Activated CD4-positive, alpha-beta T cell treated with anti-CD3 and anti-CD28 coated beads for 36 hours (primary cell): ENCODE measurements at regions of chr19 and their contacts with region 1.

Region 1: GRCh38 chr19:1131738-1132551 is 28.2 kb downstream of the GPX4 start:
- DNase-seq: peak; percentile 96
- ATAC-seq: peak; percentile 60
- H3K4me3 Mint-ChIP-seq: peak overlapping the region; percentile 91
- H3K27ac Mint-ChIP-seq: peak overlapping the region; percentile 96
- H3K4me1 Mint-ChIP-seq: peaks cover 46% of the 10 kb centered on the region
- H3K27me3 Mint-ChIP-seq: no peaks in the 10 kb centered on the region

Region 2: DNA sequence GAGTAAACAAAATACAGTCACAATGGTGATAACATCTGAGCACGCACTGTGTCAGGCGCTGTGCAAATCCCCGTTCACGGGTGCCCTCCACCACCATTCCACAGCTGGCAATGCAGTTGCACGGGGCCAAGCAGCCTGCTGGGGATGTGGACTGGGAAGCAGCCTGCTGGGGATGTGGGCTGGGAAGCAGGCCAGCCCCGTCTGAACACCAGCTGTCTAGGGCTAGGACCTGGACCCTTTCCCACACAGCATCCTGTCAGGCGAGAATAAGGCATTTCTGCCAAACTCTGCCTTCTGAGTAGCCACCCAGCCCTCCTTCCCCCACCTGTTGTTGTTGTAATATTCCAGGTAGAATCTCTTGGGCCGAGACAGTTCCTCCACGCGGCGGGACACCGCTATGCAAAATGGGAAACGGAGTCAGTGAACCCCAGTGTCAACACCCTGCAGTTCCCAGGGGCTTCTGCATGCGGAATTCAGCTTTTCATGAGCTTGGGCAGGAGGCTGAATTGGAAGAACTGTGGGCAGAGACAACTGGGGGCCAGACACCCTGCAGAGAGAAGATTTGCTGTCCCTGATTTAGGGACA is 759.5 kb before region 1 on chr19:
- CTCF ChIA-PET with region 1: no interaction called
- POLR2A ChIA-PET with region 1: no interaction called
- intact Hi-C with region 1: no loop called
- DNase-seq: no peak
- ATAC-seq: no peak
- H3K4me3 Mint-ChIP-seq: no peak overlapping the region
- H3K27ac Mint-ChIP-seq: no peak overlapping the region
- H3K4me1 Mint-ChIP-seq: no peaks in the 10 kb centered on the region
- H3K27me3 Mint-ChIP-seq: peaks cover 13% of the 10 kb centered on the region

Region 3: DNA sequence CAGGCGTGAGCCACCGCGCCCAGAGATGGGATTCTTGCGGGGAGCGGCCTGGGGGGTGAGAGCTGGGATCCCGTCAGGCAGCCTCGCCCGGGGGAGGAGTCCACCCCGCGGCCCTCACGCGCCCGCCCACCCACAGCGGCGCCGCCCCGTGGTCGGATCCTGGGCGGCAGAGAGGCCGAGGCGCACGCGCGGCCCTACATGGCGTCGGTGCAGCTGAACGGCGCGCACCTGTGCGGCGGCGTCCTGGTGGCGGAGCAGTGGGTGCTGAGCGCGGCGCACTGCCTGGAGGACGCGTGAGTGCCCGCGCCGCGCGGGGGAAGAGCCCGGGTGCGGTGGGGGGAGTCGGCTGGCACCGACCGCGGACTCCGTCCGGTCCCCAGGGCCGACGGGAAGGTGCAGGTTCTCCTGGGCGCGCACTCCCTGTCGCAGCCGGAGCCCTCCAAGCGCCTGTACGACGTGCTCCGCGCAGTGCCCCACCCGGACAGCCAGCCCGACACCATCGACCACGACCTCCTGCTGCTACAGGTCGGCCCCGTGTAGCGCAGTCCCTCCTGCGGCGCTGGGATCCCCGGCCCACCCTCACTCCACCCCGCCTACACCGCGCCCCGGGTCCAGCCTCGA is 271.4 kb before region 1 on chr19:
- CTCF ChIA-PET with region 1: no interaction called
- POLR2A ChIA-PET with region 1: no interaction called
- intact Hi-C with region 1: loop called in 1 of 2 experiments (anchors 2 kb)
- DNase-seq: peak; percentile 73
- ATAC-seq: peak; percentile 17
- H3K4me3 Mint-ChIP-seq: no peak overlapping the region
- H3K27ac Mint-ChIP-seq: no peak overlapping the region
- H3K4me1 Mint-ChIP-seq: peaks cover 13% of the 10 kb centered on the region
- H3K27me3 Mint-ChIP-seq: peaks cover 13% of the 10 kb centered on the region

Region 4: DNA sequence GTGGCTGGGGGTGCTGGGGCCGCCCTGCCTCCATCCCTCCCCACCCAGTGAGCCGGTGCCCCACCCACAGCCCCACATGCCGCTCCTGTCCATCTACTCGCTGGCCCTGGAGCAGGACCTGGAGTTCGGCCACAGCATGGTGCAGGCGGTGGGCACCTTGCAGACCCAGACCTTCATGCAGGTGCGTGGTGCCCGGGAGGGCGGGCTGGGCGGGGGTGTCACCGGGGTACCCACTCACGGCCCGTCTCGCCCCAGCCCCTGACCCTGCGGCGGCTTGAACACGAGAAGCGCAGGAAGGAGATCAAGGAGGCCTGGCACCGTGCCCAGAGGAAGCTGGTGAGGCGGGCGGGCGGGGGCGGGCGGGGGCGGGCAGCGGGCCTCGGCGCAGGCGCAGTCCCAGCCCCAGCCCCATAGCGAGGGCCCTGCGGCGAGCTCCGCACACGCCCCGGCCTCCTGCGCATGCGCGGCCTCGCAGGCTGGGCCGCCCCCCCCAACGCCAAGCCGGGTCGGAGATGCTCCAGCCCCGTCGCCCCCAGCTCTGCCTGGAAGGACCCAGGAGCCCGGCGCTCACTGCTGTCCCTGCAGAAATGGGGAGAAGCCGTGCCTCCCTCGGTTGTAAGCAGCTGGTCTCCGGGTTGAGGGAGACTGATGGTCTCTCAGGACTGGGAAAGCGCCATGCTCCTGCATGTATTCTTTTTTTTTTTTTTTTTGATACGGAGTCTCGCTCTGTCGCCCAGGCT is 57.2 kb before region 1 on chr19:
- CTCF ChIA-PET with region 1: no interaction called
- POLR2A ChIA-PET with region 1: no interaction called
- intact Hi-C with region 1: loop called in 1 of 2 experiments (anchors 1 kb)
- DNase-seq: peak; percentile 93
- ATAC-seq: peak; percentile 22
- H3K4me3 Mint-ChIP-seq: peak overlapping the region; percentile 52
- H3K27ac Mint-ChIP-seq: peak overlapping the region; percentile 84
- H3K4me1 Mint-ChIP-seq: peaks cover 63% of the 10 kb centered on the region
- H3K27me3 Mint-ChIP-seq: no peaks in the 10 kb centered on the region

Region 5: DNA sequence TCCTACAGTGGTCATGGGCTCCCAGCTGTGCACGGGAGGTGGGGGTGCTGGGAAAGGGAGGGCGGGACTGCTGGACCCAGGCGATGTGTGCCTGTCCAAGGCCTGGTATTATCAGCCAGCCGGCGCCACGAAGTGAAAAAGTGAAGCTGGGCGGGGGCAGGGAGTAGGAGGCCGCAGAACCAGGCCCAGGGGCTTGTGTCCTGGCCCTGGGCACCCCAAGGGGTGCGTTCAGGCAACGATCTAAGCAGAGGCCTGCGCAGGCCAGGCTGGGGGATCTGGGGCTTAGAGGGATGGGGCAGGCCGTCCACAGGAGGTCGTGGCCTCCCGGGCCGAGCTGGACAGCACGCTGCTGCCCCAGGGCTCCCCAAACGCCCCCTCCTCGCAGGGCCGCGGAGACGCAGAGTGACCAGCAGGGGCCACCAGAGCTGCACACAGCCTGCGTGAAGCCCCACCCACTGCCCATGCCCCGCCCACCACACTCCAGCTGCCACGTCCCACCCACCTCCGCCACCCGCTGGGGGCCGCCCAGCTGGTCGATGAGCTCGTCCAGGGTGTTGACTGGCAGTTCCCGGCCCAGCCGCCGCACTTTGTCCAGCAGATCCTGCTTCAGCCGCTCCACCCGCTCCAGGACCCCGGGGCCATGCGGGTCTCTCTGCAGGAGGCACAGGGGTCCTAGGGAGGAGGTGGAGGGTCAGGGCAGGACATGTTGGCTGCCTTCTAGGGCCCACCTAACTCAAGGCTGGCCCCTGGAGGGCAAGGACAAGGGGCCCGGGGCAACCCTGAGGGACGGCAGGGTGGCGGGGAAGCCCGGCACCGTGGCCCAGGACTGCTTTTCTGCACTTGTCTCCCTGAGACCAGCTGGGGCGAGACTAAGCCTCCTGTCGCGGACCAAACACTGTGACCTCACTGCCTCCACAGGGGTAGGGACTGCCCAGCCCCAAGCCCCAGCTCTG is 18.6 kb before region 1 on chr19:
- CTCF ChIA-PET with region 1: interaction called, 10 read pairs
- POLR2A ChIA-PET with region 1: interaction called, 4 read pairs
- intact Hi-C with region 1: no loop called
- DNase-seq: peak; percentile 94
- ATAC-seq: peak; percentile 89
- H3K4me3 Mint-ChIP-seq: no peak overlapping the region
- H3K27ac Mint-ChIP-seq: no peak overlapping the region
- H3K4me1 Mint-ChIP-seq: no peaks in the 10 kb centered on the region
- H3K27me3 Mint-ChIP-seq: no peaks in the 10 kb centered on the region

Region 6: DNA sequence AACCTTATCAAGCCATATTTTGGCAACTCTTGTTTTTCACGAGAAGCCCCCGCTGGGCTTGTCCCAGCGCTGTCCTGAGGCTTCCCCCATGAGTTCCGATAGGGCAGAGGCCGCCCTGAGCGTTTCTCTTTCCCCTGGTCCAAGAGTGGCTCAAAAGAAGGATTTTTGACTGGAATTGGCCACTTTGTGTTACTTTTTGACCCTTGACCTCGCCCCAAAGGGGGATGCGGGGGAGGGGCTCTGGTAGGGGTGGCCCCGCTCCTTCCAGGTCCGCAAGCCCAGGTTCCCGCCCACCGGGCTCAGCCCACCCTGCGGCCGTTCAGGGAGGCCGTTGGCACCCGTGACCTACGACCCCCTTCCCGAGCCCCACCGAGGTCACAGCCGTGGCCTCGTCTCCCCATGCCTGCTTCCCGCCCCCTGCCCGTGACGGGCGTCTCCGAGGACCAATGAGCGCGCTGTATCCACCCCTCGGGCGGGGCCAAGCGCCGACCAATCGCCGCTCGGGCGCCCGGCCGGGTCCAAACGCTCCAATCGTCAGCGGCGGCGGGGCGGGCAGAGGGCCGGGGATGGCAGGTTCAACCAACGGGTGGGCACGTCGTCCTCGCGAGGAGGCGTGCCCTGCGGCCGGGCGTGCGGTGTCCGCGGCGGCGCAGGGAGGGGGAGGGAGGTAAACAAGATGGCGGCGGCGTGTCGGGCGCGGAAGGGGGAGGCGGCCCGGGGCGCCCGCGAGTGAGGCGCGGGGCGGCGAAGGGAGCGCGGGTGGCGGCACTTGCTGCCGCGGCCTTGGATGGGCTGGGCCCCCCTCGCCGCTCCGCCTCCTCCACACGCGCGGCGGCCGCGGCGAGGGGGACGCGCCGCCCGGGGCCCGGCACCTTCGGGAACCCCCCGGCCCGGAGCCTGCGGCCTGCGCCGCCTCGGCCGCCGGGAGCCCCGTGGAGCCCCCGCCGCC is 73.4 kb after region 1 on chr19 and contains the start of gene STK11:
- CTCF ChIA-PET with region 1: no interaction called
- POLR2A ChIA-PET with region 1: interaction called, 3 read pairs
- intact Hi-C with region 1: loop called in 1 of 2 experiments (anchors 1 kb)
- DNase-seq: peak; percentile 100
- ATAC-seq: peak; percentile 97
- H3K4me3 Mint-ChIP-seq: peak within 1 kb of the TSS; percentile 93
- H3K27ac Mint-ChIP-seq: peak within 1 kb of the TSS; percentile 77
- H3K4me1 Mint-ChIP-seq: peaks cover 23% of the 10 kb centered on the region
- H3K27me3 Mint-ChIP-seq: no peaks in the 10 kb centered on the region
- total RNA-seq, gene STK11: 49.2 to 61.5 TPM

Region 7: DNA sequence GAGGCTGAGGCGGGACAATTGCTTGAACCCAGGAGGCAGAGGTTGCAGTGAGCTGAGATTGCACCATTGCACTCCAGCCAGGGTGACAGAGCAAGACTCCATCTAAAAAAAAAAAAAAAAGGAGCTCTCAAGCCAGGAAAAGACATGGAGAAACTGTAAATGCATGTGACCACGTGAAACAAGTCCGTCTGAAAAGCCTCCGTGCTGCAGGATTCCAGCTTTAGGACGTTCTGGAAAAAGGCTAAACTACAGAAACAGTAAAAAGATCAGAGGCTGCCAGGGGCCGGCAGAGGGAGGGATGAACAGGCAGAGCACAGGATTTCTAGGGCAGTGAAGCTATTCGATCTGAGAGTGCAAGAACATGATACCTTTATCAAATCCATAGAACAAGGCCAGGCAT is 211.1 kb after region 1 on chr19:
- CTCF ChIA-PET with region 1: no interaction called
- POLR2A ChIA-PET with region 1: no interaction called
- intact Hi-C with region 1: no loop called
- DNase-seq: no peak
- ATAC-seq: no peak
- H3K4me3 Mint-ChIP-seq: no peak overlapping the region
- H3K27ac Mint-ChIP-seq: no peak overlapping the region
- H3K4me1 Mint-ChIP-seq: peaks cover 4% of the 10 kb centered on the region
- H3K27me3 Mint-ChIP-seq: peaks cover 1% of the 10 kb centered on the region

Region 8: GRCh38 chr19:1383311-1384084 is 251.6 kb after region 1 on chr19 and contains the start of gene NDUFS7:
- CTCF ChIA-PET with region 1: no interaction called
- POLR2A ChIA-PET with region 1: no interaction called
- intact Hi-C with region 1: loop called in 1 of 2 experiments (anchors 1 kb)
- DNase-seq: peak; percentile 94
- ATAC-seq: peak; percentile 88
- H3K4me3 Mint-ChIP-seq: peak within 1 kb of the TSS; percentile 81
- H3K27ac Mint-ChIP-seq: peak within 1 kb of the TSS; percentile 92
- H3K4me1 Mint-ChIP-seq: peaks cover 21% of the 10 kb centered on the region
- H3K27me3 Mint-ChIP-seq: peaks cover 2% of the 10 kb centered on the region
- total RNA-seq, gene NDUFS7: 93.4 to 113 TPM